H1 (cell line): ENCODE measurements at regions of chr6 and their contacts with region 1.

Region 1: DNA sequence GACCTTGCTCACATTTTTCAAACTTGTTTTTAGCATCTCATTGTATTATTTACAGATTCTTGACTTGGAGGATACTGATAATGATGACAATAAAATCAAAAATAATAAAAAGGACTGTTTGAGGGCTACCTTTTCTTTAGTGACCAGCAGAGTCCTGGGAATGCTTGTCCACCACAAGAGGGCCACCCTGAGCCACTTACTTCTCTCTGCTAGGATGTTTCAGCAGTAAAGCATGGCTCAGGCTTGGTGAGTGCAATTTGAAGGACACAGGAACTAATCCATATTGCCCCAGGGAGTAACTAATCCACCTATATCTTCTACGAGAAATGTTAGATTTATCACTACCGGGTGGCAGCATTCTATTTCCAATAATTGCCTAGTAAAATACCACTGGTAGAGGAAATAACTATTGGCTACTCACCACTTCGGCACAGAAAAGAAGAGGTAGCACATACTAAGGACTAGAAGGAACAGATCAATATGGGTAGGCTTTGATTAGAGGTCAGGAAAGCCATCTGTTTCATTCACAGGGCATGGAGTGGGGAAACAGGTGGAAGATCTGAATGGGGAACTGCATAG is 5.8 kb upstream of the KIAA0408 start:
- DNase-seq: peak in 1 of 2 experiments; percentile 74
- H3K4me3 ChIP-seq: no peak overlapping the region
- H3K27ac ChIP-seq: no peak overlapping the region
- H3K4me1 ChIP-seq: no peaks in the 10 kb centered on the region
- H3K27me3 ChIP-seq: no peaks in the 10 kb centered on the region
- CTCF ChIP-seq: peak; percentile 60 to 91 (median 84)
- EP300 ChIP-seq: no peak
- POLR2A ChIP-seq: no peak
- RAD21 ChIP-seq: peak; percentile 92 to 94

Region 2: DNA sequence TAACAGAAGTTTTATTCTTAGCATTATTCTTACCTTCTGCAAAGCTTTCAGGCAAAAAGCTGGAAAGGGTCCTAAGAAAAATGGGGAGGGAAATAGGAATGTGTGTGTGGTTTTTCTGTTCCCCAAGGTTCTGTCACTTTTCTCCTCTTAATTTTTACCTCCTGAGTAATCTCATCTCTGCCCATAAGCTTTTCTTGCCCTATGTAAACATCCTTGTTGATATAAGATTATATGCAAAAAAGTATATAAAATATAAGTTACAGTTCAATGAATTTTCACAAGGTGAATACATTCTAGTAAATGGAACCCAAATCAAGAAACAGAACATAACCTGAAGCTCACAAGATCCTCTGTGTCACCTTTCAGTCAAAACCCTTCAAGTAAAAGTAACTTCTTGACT is 133.2 kb before region 1 on chr6:
- CTCF ChIA-PET with region 1: no interaction called
- POLR2A ChIA-PET with region 1: no interaction called
- DNase-seq: no peak
- H3K4me3 ChIP-seq: no peak overlapping the region
- H3K27ac ChIP-seq: no peak overlapping the region
- H3K4me1 ChIP-seq: peaks cover 0 to 4% (median 0%) of the 10 kb centered on the region in 4 experiments; a peak in 1 of 7 replicates
- H3K27me3 ChIP-seq: no peaks in the 10 kb centered on the region
- CTCF ChIP-seq: no peak
- EP300 ChIP-seq: no peak
- POLR2A ChIP-seq: no peak
- RAD21 ChIP-seq: no peak

Region 3: GRCh38 chr6:127539272-127539671 is 74.3 kb after region 1 on chr6:
- CTCF ChIA-PET with region 1: interaction called, 26 read pairs
- POLR2A ChIA-PET with region 1: no interaction called
- DNase-seq: no peak
- H3K4me3 ChIP-seq: no peak overlapping the region
- H3K27ac ChIP-seq: no peak overlapping the region
- H3K4me1 ChIP-seq: no peaks in the 10 kb centered on the region
- H3K27me3 ChIP-seq: no peaks in the 10 kb centered on the region
- CTCF ChIP-seq: peak in 1 of 3 experiments; percentile 1; a peak in 1 of 4 replicates
- EP300 ChIP-seq: no peak
- POLR2A ChIP-seq: no peak
- RAD21 ChIP-seq: peak in 1 of 2 experiments; percentile 35; a peak in 3 of 4 replicates

Region 4: GRCh38 chr6:127547215-127547614 is 82.2 kb after region 1 on chr6:
- CTCF ChIA-PET with region 1: interaction called, 41 read pairs
- POLR2A ChIA-PET with region 1: no interaction called
- DNase-seq: no peak
- H3K4me3 ChIP-seq: no peak overlapping the region
- H3K27ac ChIP-seq: no peak overlapping the region
- H3K4me1 ChIP-seq: no peaks in the 10 kb centered on the region
- H3K27me3 ChIP-seq: peaks cover 0 to 1% (median 0%) of the 10 kb centered on the region in 4 experiments; a peak in 1 of 7 replicates
- CTCF ChIP-seq: peak; percentile 59 to 66 (median 63)
- EP300 ChIP-seq: no peak
- POLR2A ChIP-seq: no peak
- RAD21 ChIP-seq: peak; percentile 52 to 68